HAP-1 (cell line): ENCODE measurements at regions of chr1 and their contacts with region 1.

Region 1: GRCh38 chr1:165114022-165114888 is 242.3 kb downstream of the LMX1A start:
- DNase-seq: peak; percentile 38 to 80
- H3K4me3 ChIP-seq: no peak overlapping the region
- H3K4me1 ChIP-seq: no peaks in the 10 kb centered on the region
- H3K27me3 ChIP-seq: peaks cover 16% of the 10 kb centered on the region

Region 2: GRCh38 chr1:165173409-165173808 is 59.2 kb after region 1 on chr1:
- in situ Hi-C with region 1: no loop called
- DNase-seq: no peak
- H3K4me3 ChIP-seq: no peak overlapping the region
- H3K4me1 ChIP-seq: no peaks in the 10 kb centered on the region
- H3K27me3 ChIP-seq: no peaks in the 10 kb centered on the region

Region 3: DNA sequence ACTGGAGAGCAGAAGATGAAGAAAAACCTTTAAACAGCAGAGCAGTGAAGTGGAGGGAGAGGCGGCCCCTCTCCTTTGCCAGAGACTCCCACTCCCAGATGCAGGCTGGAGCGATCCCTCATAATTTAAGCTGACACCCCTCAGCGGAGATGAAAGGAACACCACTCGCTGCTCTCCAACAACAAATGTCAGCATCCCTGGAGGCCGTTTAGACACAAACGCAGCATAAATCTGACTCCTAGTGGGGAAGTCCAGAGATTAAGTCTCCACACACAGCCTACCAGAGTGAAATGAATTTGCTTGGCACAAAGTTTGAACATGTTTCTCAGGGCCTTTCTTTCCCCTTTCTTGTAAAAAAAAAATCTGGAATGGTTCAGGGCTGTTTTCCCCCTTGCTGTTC is 104.5 kb after region 1 on chr1:
- in situ Hi-C with region 1: loop called (anchors 25 kb)
- DNase-seq: no peak
- H3K4me3 ChIP-seq: no peak overlapping the region
- H3K4me1 ChIP-seq: no peaks in the 10 kb centered on the region
- H3K27me3 ChIP-seq: 0 out of 2 replicates have a peak, but pooled peaks cover 2% of the 10 kb centered on the region

Region 4: DNA sequence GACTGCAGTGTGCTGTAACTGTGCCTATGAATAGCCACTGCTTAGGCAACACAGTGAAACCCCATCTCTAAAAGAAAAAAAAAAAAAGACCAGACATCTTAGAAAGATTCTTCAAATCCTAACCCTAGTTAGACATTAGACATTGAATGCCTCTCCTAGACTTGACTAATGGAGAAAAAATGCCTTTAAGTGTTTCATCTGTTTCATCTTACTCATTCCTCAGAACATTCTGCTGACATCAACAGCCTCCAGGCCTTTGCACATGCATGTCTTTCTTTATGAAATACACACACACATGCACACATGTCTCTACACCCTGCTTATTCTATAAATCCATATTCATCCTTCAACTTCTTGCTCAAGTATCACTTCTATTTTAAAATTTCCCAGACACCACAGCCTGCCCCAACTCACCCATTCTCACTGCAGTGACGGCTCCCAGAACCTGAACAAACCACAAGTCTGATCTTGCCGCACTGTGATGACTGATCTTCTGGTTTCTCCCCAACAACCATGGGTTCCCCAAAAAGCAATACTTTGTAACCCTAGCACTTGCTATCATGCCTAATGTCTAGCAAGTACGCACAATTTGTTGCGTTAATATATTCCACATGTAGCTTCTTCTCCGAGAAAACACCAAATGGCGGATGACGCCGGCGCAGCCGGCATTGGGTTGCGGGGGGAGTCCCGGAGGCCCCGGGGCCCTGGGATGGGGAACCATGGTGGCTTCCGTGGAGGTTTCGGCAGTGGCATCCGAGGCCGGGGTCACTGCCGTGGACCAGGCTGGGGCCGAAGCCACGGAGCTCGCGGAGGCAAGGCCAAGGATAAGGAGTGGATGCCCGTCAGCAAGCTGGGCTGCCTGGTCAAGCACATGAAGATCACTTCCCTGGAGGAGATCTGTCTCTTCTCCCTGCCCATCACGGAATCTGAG is 467.0 kb after region 1 on chr1:
- in situ Hi-C with region 1: loop called (anchors 10 kb)
- DNase-seq: no peak
- H3K4me3 ChIP-seq: no peak overlapping the region
- H3K4me1 ChIP-seq: no peaks in the 10 kb centered on the region
- H3K27me3 ChIP-seq: peaks cover 5% of the 10 kb centered on the region; the same call in 1 of the 2 replicates

Region 5: DNA sequence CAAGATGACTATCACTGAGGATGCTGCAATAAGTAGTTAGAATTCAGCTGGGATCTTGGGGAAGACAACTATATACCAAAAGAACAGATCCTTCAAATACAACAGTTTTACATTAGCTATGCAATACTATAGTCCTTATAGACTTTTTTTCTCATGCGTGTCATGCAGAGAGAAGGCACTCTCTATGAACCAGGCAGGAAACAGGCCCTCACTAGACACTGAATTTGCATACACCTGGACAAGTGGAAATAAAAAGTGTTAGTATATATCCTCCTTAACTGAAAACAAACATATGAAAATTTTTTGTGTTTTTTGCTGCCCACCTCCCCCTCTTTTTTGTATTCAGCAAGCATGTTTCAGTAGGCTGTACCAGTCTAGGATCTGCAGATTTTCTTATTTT is 624.5 kb after region 1 on chr1:
- in situ Hi-C with region 1: no loop called
- DNase-seq: no peak
- H3K4me3 ChIP-seq: no peak overlapping the region
- H3K4me1 ChIP-seq: no peaks in the 10 kb centered on the region
- H3K27me3 ChIP-seq: no peaks in the 10 kb centered on the region